ENCODE measurements at regions of chr10 and their contacts with region 1.

Region 1: DNA sequence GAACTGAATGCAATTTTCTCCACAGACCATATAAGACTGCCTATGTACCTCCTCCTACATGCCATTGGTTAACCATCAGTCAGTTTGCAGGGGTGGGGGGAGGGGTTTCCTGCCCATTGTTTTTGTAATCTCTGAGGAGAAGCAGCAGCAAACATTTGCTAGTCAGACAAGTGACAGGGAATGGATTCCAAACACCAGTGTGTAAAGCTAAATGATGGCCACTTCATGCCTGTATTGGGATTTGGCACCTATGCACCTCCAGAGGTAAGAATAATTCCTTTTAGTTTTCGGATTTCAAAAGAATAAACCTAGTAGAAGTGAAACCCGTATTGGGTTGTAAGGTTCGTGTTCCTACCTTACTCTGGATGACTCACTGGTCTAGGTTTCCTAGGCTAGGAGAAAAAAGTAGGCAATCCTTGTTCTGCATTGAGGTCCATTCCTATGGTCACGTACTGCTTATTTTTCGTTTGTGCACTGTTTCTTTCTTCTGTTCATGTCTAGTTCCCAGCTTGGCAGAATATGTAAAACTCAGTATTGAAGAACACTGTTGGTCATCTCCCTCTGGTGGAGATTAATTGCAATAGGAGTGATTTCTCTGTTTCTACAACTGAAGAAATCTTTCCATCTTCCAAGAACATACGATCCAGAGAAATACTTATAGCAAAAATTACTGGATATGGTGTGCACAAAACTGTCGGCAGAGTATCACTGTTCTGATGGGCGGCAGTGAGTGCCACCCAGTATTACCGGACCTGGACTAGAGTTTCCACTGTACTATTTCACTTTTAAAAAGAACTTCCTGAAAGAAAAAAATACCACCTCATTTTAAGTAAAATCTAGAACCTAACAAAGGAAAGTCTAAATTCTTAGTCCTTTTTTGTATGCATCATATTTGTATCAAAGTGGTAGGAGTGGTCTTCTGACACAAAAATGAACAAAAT is at the start of gene AKR1C3:
- DNase-seq: no peak
- ATAC-seq: peak; percentile 93
- total RNA-seq, gene AKR1C3: 60.2 to 91.3 TPM

Region 2: GRCh38 chr10:4981722-4982471 is 112.6 kb before region 1 on chr10:
- intact Hi-C with region 1: loop called in 1 of 2 experiments (anchors 10 kb)
- DNase-seq: peak; percentile 33
- ATAC-seq: peak; percentile 25 to 64

Region 3: DNA sequence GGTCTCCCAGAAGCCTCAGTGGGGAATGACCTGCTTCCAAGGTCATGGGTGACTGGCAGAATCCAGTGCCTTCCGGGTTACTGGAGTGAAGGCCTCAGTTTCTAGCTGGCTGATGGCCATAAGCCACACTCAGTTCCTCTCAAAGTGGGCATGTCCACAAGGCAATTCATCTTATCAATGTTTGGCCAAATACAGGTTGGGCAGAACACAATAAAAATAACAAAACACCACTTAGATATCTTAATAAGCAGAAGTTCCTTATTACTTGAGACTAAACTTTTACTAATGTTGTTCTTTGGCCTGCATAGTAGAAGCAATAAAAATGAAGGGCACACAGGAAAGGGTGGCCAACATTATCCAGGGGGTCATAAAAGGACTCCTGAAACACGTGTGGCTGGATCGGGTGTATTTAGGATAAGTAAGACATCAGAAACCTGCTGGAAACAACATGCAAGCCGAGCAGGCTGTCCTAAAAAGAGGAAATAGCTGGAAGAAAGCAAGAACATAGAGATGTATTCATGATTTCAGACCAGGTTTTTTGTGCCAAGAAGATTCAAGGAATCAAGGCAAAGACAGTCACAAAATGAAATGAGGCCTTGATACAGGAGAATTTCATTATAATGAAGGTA is 71.2 kb before region 1 on chr10:
- intact Hi-C with region 1: loop called in 1 of 2 experiments (anchors 10 kb)
- DNase-seq: no peak
- ATAC-seq: no peak

Region 4: GRCh38 chr10:5125315-5126044 is 30.9 kb after region 1 on chr10:
- intact Hi-C with region 1: no loop called
- DNase-seq: no peak
- ATAC-seq: no peak

Region 5: DNA sequence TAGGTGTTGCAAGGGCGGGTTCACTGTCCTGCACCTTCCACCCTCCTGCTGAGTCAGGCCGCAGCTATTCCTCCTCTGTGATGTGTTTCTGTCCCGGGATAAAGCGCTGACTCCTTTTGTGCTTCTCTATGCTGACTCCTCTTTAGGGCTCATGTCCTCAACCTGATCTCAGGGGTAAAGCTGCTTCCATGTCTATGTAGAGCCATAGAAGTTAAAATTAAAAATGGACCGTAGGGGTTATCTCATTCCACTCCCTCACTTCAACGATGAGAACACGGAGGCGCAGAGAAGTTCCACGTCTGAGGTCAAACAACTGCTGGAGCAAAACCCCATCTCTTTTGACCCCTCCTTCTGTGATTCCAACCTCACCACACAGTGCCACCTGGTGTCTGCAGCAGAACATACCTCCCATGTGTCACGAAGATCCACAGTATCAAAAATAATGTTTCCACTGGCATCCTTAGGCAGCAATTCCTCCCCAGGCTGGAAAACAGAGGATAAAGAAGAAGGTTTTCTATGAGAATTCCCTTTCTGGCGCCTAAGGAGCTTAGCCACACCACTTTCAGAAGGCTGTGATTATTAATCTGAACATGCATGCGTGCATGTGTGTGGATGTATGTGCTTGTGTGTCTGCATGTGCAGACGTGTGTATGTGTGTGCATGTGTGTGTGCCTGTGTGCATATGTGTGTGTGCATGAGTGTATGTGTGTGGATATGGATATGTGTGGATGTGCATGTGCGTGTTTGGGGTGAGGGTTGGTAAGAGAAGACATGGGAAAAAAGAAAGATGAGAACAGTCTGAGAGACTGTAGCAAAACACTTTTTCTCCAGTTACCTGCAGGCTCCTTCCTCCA is 189.0 kb after region 1 on chr10:
- intact Hi-C with region 1: loop called in 1 of 2 experiments (anchors 5 kb)
- DNase-seq: peak; percentile 63
- ATAC-seq: peak; percentile 86 to 95

Measured in left cardiac atrium (tissue), 4 donors.